Panc1 (cell line): ENCODE measurements at regions of chr7 and their contacts with region 1.

Region 1: GRCh38 chr7:30503274-30504212 is 1.1 kb downstream of the GGCT start:
- DNase-seq: no peak
- ATAC-seq: no peak
- H3K4me3 ChIP-seq: peak overlapping the region; percentile 89 to 94
- H3K27ac ChIP-seq: peak overlapping the region; percentile 87
- H3K4me1 ChIP-seq: peaks cover 15% of the 10 kb centered on the region; the same call in 1 of the 2 replicates
- H3K27me3 ChIP-seq: no peaks in the 10 kb centered on the region
- CTCF ChIP-seq: no peak

Region 2: GRCh38 chr7:30256349-30256858 is 247.1 kb before region 1 on chr7:
- CTCF ChIA-PET with region 1: no interaction called
- POLR2A ChIA-PET with region 1: interaction called, 14 read pairs
- in situ Hi-C with region 1: no loop called
- intact Hi-C with region 1: no loop called
- DNase-seq: no peak
- ATAC-seq: no peak
- H3K4me3 ChIP-seq: no peak overlapping the region
- H3K27ac ChIP-seq: no peak overlapping the region
- H3K4me1 ChIP-seq: no peaks in the 10 kb centered on the region
- H3K27me3 ChIP-seq: peaks cover 3% of the 10 kb centered on the region; the same call in 1 of the 2 replicates
- CTCF ChIP-seq: no peak

Region 3: DNA sequence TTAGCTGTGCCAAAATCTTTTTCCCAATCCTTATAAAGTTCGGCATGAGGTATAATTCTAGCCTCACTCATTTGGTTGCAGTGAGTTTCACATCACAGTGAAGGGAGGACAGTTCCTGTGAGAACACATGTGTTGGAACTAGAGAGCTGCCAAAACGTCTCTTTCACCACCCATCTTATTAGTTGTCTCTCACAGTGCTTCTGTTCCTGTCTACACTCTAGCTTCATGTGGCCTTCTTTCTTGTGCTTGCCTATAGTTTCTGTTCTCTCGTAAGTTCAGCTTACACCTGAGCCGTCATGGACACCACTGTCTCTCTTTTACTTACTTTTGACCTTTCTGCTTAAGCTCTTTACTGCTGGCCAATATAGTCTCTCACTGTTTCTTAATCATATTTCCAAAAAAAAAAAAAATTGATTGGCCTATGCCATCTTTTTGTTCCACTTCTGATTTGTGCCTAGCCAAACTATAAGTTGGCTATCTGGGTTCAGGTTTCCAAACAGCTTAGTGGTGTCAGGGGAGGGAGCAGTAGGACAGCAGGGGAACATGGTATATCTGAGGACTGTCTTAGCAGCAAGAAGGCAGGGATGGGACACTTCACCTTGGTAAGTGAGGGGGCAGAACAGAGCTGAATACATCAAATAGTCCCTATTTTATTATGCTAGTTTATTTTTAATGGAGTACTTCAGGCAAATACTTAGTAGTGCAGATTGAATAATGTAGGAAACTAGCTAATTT is 181.1 kb before region 1 on chr7:
- CTCF ChIA-PET with region 1: no interaction called
- POLR2A ChIA-PET with region 1: interaction called, 10 read pairs
- in situ Hi-C with region 1: no loop called
- intact Hi-C with region 1: no loop called
- DNase-seq: no peak
- ATAC-seq: peak; percentile 78
- H3K4me3 ChIP-seq: peak overlapping the region; percentile 18 to 25; a peak in 2 of 4 replicates
- H3K27ac ChIP-seq: peak overlapping the region; percentile 77
- H3K4me1 ChIP-seq: peaks cover 41% of the 10 kb centered on the region
- H3K27me3 ChIP-seq: no peaks in the 10 kb centered on the region
- CTCF ChIP-seq: no peak

Region 4: GRCh38 chr7:30572212-30572841 is 68.8 kb after region 1 on chr7:
- CTCF ChIA-PET with region 1: no interaction called
- POLR2A ChIA-PET with region 1: interaction called, 19 read pairs
- in situ Hi-C with region 1: no loop called
- intact Hi-C with region 1: no loop called
- DNase-seq: no peak
- ATAC-seq: no peak
- H3K4me3 ChIP-seq: no peak overlapping the region
- H3K27ac ChIP-seq: no peak overlapping the region
- H3K4me1 ChIP-seq: no peaks in the 10 kb centered on the region
- H3K27me3 ChIP-seq: no peaks in the 10 kb centered on the region
- CTCF ChIP-seq: no peak